ENCODE measurements at regions of chr14 and their contacts with region 1.

Region 1: GRCh38 chr14:61837336-61838229 is 75.4 kb downstream of the SNAPC1 start:
- DNase-seq: peak; percentile 86
- H3K4me3 Mint-ChIP-seq: no peak overlapping the region
- H3K27ac Mint-ChIP-seq: no peak overlapping the region
- H3K4me1 Mint-ChIP-seq: no peaks in the 10 kb centered on the region
- H3K27me3 Mint-ChIP-seq: no peaks in the 10 kb centered on the region
- CTCF ChIP-seq: peak; percentile 93

Region 2: GRCh38 chr14:61269321-61270083 is 568.1 kb before region 1 on chr14:
- CTCF ChIA-PET with region 1: interaction called, 20 read pairs
- POLR2A ChIA-PET with region 1: no interaction called
- intact Hi-C with region 1: loop called (anchors 5 kb)
- DNase-seq: peak; percentile 90
- H3K4me3 Mint-ChIP-seq: peak overlapping the region; percentile 65
- H3K27ac Mint-ChIP-seq: no peak overlapping the region
- H3K4me1 Mint-ChIP-seq: no peaks in the 10 kb centered on the region
- H3K27me3 Mint-ChIP-seq: peaks cover 39% of the 10 kb centered on the region
- CTCF ChIP-seq: peak; percentile 79

Region 3: DNA sequence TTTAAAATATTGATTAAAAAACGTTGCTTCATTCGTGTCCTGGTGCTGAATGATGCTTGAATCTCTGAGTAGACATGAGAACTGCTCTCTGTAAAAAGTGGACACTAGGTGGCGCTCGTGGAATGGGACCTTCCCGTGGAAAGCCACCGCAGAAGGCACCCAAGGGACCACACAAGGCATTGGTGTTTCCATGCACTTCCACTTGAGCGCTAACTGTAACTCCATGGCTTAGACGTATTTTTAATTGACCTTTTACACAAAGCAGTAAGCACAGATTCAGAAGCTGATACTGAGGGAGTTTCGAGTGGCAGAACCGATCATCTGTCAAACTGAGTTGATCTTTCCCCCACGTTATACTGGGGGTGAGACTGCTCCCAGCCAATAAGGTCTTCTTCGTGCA is 380.9 kb before region 1 on chr14:
- CTCF ChIA-PET with region 1: interaction called, 62 read pairs
- POLR2A ChIA-PET with region 1: interaction called, 6 read pairs
- intact Hi-C with region 1: loop called (anchors 1 kb)
- DNase-seq: peak; percentile 79
- H3K4me3 Mint-ChIP-seq: no peak overlapping the region
- H3K27ac Mint-ChIP-seq: no peak overlapping the region
- H3K4me1 Mint-ChIP-seq: peaks cover 6% of the 10 kb centered on the region
- H3K27me3 Mint-ChIP-seq: no peaks in the 10 kb centered on the region
- CTCF ChIP-seq: peak; percentile 75

Region 4: DNA sequence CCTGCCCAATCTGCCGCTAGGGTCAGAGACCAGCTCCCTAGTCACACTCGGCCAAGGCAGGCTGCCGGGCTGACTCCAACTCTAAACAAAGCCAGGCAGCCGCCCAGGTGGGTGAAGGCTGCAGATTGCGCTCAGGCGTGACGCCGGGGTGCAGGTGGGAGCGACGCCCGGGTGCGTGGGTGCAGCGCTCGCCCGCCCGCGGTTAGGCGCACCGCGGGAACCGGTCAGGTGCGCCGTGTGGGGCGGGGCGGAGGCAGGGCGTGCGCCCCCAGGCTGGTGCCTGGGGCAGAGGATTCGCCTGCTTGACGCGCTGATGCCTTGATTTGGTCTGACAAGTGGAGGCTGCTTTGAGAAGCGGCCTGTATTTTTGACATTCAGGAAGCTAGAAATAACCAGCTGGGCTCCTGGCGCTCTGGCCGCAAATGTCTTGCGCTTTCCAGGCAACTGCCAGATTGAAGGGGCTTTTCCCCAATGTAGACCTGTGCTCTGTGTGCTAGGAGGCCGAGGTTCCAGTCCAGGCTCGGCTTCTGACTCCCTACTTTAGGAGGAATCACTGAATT is 268.9 kb before region 1 on chr14:
- CTCF ChIA-PET with region 1: no interaction called
- POLR2A ChIA-PET with region 1: no interaction called
- intact Hi-C with region 1: loop called (anchors 5 kb)
- DNase-seq: peak; percentile 69
- H3K4me3 Mint-ChIP-seq: peak overlapping the region; percentile 67
- H3K27ac Mint-ChIP-seq: peak overlapping the region; percentile 85
- H3K4me1 Mint-ChIP-seq: peaks cover 75% of the 10 kb centered on the region
- H3K27me3 Mint-ChIP-seq: no peaks in the 10 kb centered on the region
- CTCF ChIP-seq: peak; percentile 7

Region 5: GRCh38 chr14:61750708-61751474 is 86.7 kb before region 1 on chr14:
- CTCF ChIA-PET with region 1: interaction called, 18 read pairs
- POLR2A ChIA-PET with region 1: interaction called, 3 read pairs
- intact Hi-C with region 1: loop called (anchors 5 kb)
- DNase-seq: peak; percentile 87
- H3K4me3 Mint-ChIP-seq: peak overlapping the region; percentile 78
- H3K27ac Mint-ChIP-seq: peak overlapping the region; percentile 70
- H3K4me1 Mint-ChIP-seq: peaks cover 17% of the 10 kb centered on the region
- H3K27me3 Mint-ChIP-seq: no peaks in the 10 kb centered on the region
- CTCF ChIP-seq: no peak

Region 6: GRCh38 chr14:61822458-61822857 is 15.1 kb before region 1 on chr14:
- CTCF ChIA-PET with region 1: interaction called, 11 read pairs
- POLR2A ChIA-PET with region 1: interaction called, 3 read pairs
- intact Hi-C with region 1: no loop called
- DNase-seq: no peak
- H3K4me3 Mint-ChIP-seq: no peak overlapping the region
- H3K27ac Mint-ChIP-seq: no peak overlapping the region
- H3K4me1 Mint-ChIP-seq: no peaks in the 10 kb centered on the region
- H3K27me3 Mint-ChIP-seq: no peaks in the 10 kb centered on the region
- CTCF ChIP-seq: no peak